ENCODE measurements at regions of chr19 and their contacts with region 1.

Region 1: GRCh38 chr19:35995048-35995993 is at the start of gene SDHAF1:
- DNase-seq: peak; percentile 82 to 96 (median 88)
- ATAC-seq: peak; percentile 89 to 90
- H3K4me3 Mint-ChIP-seq: peak within 1 kb of the TSS; percentile 86 to 97 (median 96)
- H3K27ac Mint-ChIP-seq: peak within 1 kb of the TSS; percentile 92 to 98 (median 96)
- H3K4me1 Mint-ChIP-seq: peaks cover 22 to 43% (median 42%) of the 10 kb centered on the region in 4 donors
- H3K27me3 Mint-ChIP-seq: no peaks in the 10 kb centered on the region
- polyA plus RNA-seq, gene SDHAF1: 31.9 to 50.9 (median 34.9) TPM

Region 2: DNA sequence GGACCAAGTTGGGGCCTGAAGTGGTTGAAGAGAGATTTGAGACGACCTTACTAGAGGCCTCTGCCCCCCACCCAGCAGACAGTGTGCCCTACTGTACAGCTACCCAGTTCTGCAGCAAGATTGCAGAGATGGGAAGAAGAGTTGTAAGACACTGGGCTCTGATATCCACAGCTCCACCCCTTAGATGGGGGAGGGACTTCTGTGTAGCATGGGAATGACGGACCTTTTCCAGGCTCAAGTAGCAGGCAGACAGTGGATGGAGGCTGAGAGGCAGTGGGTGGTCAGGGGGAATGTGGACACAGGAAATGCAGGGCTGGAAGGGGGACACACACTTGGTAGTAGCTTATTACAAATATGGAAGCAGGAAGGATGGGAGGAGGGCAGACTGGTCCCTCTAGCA is 46.2 kb before region 1 on chr19:
- POLR2A ChIA-PET with region 1: interaction called, 30 read pairs
- DNase-seq: no peak
- ATAC-seq: no peak
- H3K4me3 Mint-ChIP-seq: peak overlapping the region in 1 of 10 donors; percentile 64
- H3K27ac Mint-ChIP-seq: peak overlapping the region in 9 of 10 donors; percentile 8 to 91 (median 81)
- H3K4me1 Mint-ChIP-seq: peaks cover 32 to 76% (median 55%) of the 10 kb centered on the region in 4 donors
- H3K27me3 Mint-ChIP-seq: no peaks in the 10 kb centered on the region

Region 3: GRCh38 chr19:36054119-36054732 is 58.9 kb after region 1 on chr19 and contains the start of gene THAP8:
- POLR2A ChIA-PET with region 1: interaction called, 11 read pairs
- DNase-seq: peak; percentile 97 to 100 (median 100)
- ATAC-seq: peak; percentile 83 to 85
- H3K4me3 Mint-ChIP-seq: peak within 1 kb of the TSS; percentile 95 to 100 (median 98)
- H3K27ac Mint-ChIP-seq: peak within 1 kb of the TSS; percentile 92 to 99 (median 98)
- H3K4me1 Mint-ChIP-seq: peaks cover 13 to 33% (median 28%) of the 10 kb centered on the region in 4 donors
- H3K27me3 Mint-ChIP-seq: no peaks in the 10 kb centered on the region
- polyA plus RNA-seq, gene THAP8: 2.4 to 7.2 (median 5.3) TPM

Region 4: GRCh38 chr19:36418287-36419001 is 423.1 kb after region 1 on chr19 and contains the start of gene ZFP82:
- POLR2A ChIA-PET with region 1: no interaction called
- DNase-seq: peak; percentile 51 to 83 (median 72)
- ATAC-seq: peak; percentile 92
- H3K4me3 Mint-ChIP-seq: peak within 1 kb of the TSS; percentile 84 to 99 (median 93)
- H3K27ac Mint-ChIP-seq: peak within 1 kb of the TSS; percentile 87 to 99 (median 94)
- H3K4me1 Mint-ChIP-seq: peaks cover 9 to 25% (median 22%) of the 10 kb centered on the region in 4 donors
- H3K27me3 Mint-ChIP-seq: peaks cover 10 to 31% (median 17%) of the 10 kb centered on the region in 5 donors
- polyA plus RNA-seq, gene ZFP82: 2.8 to 13.5 (median 5.3) TPM

Measured in naive thymus-derived CD8-positive, alpha-beta T cell (primary cell).